AG04450 (cell line): ENCODE measurements at regions of chr2 and their contacts with region 1.

Region 1: GRCh38 chr2:175030380-175031271 is 25.4 kb upstream of the CHN1 start:
- DNase-seq: peak; percentile 8
- H3K4me3 ChIP-seq: no peak overlapping the region
- H3K27ac ChIP-seq: peak overlapping the region; percentile 0
- H3K27me3 ChIP-seq: no peaks in the 10 kb centered on the region
- CTCF ChIP-seq: peak; percentile 59

Region 2: GRCh38 chr2:175282290-175282689 is 251.7 kb after region 1 on chr2:
- CTCF ChIA-PET with region 1: interaction called, 23 read pairs
- POLR2A ChIA-PET with region 1: no interaction called
- DNase-seq: no peak
- H3K4me3 ChIP-seq: no peak overlapping the region
- H3K27ac ChIP-seq: no peak overlapping the region
- H3K27me3 ChIP-seq: peaks cover 8% of the 10 kb centered on the region
- CTCF ChIP-seq: peak; percentile 60